ENCODE measurements at regions of chr10 and their contacts with region 1.

Region 1: GRCh38 chr10:56360967-56361612 is at the start of gene ZWINT:
- DNase-seq: peak; percentile 98
- H3K4me3 ChIP-seq: peak within 1 kb of the TSS; percentile 96
- H3K27ac ChIP-seq: peak within 1 kb of the TSS; percentile 62
- H3K4me1 ChIP-seq: peaks cover 39% of the 10 kb centered on the region
- CTCF ChIP-seq: no peak
- total RNA-seq, gene ZWINT: 220 and 230 TPM in 2 replicates

Region 2: GRCh38 chr10:55704944-55705343 is 656.1 kb before region 1 on chr10:
- CTCF ChIA-PET with region 1: no interaction called
- POLR2A ChIA-PET with region 1: no interaction called
- intact Hi-C with region 1: no loop called
- DNase-seq: no peak
- H3K4me3 ChIP-seq: no peak overlapping the region
- H3K27ac ChIP-seq: no peak overlapping the region
- H3K4me1 ChIP-seq: no peaks in the 10 kb centered on the region
- CTCF ChIP-seq: no peak

Region 3: GRCh38 chr10:56349611-56350010 is 11.5 kb before region 1 on chr10:
- CTCF ChIA-PET with region 1: no interaction called
- POLR2A ChIA-PET with region 1: interaction called, 26 read pairs
- intact Hi-C with region 1: no loop called
- DNase-seq: peak; percentile 25
- H3K4me3 ChIP-seq: no peak overlapping the region
- H3K27ac ChIP-seq: no peak overlapping the region
- H3K4me1 ChIP-seq: peaks cover 4% of the 10 kb centered on the region
- CTCF ChIP-seq: peak; percentile 70

Region 4: GRCh38 chr10:56383806-56384205 is 22.7 kb after region 1 on chr10:
- CTCF ChIA-PET with region 1: no interaction called
- POLR2A ChIA-PET with region 1: interaction called, 21 read pairs
- intact Hi-C with region 1: no loop called
- DNase-seq: no peak
- H3K4me3 ChIP-seq: no peak overlapping the region
- H3K27ac ChIP-seq: no peak overlapping the region
- H3K4me1 ChIP-seq: peaks cover under 1% of the 10 kb centered on the region
- CTCF ChIP-seq: no peak

Region 5: GRCh38 chr10:56508562-56508961 is 147.5 kb after region 1 on chr10:
- CTCF ChIA-PET with region 1: no interaction called
- POLR2A ChIA-PET with region 1: no interaction called
- intact Hi-C with region 1: no loop called
- DNase-seq: no peak
- H3K4me3 ChIP-seq: no peak overlapping the region
- H3K27ac ChIP-seq: no peak overlapping the region
- H3K4me1 ChIP-seq: peaks cover 2% of the 10 kb centered on the region
- CTCF ChIP-seq: no peak

Region 6: DNA sequence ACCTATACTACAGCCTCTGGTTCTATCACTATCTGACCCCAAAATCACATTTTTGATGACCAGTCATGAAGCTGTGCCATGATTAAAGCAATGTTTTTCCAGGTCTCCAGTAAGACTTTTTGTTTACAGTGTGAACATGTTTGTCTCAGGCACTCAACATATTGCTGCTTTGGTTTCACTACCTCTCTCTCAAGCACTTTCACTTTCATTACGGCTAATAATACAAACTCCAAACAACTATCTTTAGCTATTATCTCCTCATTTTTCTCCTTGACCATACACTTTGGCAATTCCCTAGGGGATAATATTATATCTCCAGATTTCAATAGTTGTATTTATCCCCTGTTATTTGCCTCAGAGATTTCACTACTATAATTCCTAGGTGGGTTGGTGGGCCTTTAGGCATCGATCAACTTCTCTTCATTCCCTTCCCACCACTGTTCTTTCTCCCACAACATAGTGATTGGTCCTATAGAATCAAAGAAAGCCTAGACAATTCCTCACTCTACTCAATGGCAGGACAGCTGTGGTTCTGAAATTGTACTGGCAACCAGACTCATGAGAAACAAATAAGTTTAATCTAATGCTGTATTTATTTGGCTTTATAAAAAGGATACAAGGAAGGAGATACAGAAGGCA is 261.4 kb after region 1 on chr10:
- CTCF ChIA-PET with region 1: no interaction called
- POLR2A ChIA-PET with region 1: interaction called, 15 read pairs
- intact Hi-C with region 1: no loop called
- DNase-seq: peak; percentile 65
- H3K4me3 ChIP-seq: peak overlapping the region; percentile 46
- H3K27ac ChIP-seq: peak overlapping the region; percentile 51
- H3K4me1 ChIP-seq: peaks cover 41% of the 10 kb centered on the region
- CTCF ChIP-seq: no peak

Region 7: GRCh38 chr10:56902552-56902951 is 541.5 kb after region 1 on chr10:
- CTCF ChIA-PET with region 1: no interaction called
- POLR2A ChIA-PET with region 1: no interaction called
- intact Hi-C with region 1: no loop called
- DNase-seq: no peak
- H3K4me3 ChIP-seq: no peak overlapping the region
- H3K27ac ChIP-seq: no peak overlapping the region
- H3K4me1 ChIP-seq: no peaks in the 10 kb centered on the region
- CTCF ChIP-seq: no peak

Measured in OCI-LY7 (cell line).